MCF 10A (cell line): ENCODE measurements at regions of chr2 and their contacts with region 1.

Region 1: DNA sequence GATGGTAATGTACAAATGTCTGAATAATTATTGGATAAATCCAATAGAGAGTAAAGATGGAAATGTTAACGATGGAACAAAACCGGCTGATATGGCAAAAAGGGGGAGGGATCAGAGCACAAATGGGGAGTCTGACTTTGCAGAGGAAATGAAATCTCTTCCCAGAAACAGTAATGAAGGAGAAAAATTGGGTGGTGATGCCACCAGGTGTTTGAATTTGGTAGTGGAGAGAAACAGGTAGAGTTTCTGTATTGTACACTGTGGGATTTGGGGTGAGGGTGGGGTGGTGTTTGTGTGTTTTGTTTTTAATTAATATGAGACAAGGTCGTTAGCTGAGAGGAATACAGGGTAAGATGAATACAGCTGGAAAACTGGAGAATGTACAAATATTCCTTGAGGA is 20.4 kb upstream of the XDH start:
- DNase-seq: peak; percentile 55
- H3K4me3 Mint-ChIP-seq: no peak overlapping the region
- H3K27ac Mint-ChIP-seq: no peak overlapping the region
- H3K4me1 Mint-ChIP-seq: peaks cover 8% of the 10 kb centered on the region
- H3K27me3 Mint-ChIP-seq: no peaks in the 10 kb centered on the region
- CTCF ChIP-seq: peak; percentile 38

Region 2: DNA sequence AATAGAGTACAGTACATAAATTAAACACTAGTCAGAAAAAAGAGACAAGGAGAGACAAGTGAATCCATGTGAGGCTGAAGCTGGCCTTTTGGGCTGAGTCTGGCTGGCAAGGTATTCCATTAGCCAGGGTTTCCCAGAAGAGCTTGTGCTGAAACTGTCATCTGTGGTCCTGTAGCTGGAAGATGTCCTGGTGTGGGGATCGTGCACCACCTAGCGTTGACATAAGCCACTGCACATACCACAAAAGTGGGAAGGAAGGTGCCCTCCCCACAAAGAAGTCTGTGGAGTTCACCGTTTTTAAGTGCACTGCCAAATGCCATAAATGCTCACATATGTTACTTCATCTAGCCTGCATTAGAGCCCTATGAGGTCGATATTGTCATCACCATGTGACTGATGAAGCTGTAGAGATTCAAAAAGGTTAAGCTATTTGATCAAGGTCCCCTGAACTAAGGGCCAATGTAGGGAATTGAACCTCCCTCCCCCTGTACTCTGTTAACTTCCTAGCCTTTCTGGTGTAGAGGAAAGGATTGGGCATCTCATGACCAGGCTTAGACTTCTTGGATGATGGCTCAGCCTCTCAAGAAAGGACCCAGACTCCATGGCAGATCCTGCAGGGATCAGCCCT is 264.7 kb before region 1 on chr2:
- CTCF ChIA-PET with region 1: interaction called, 3 read pairs
- POLR2A ChIA-PET with region 1: no interaction called
- intact Hi-C with region 1: loop called (anchors 1 kb)
- DNase-seq: peak; percentile 71
- H3K4me3 Mint-ChIP-seq: no peak overlapping the region
- H3K27ac Mint-ChIP-seq: no peak overlapping the region
- H3K4me1 Mint-ChIP-seq: no peaks in the 10 kb centered on the region
- H3K27me3 Mint-ChIP-seq: peaks cover 18% of the 10 kb centered on the region
- CTCF ChIP-seq: peak; percentile 96

Region 3: GRCh38 chr2:31233741-31234682 is 200.9 kb before region 1 on chr2 and contains the start of gene EHD3:
- CTCF ChIA-PET with region 1: no interaction called
- POLR2A ChIA-PET with region 1: no interaction called
- intact Hi-C with region 1: loop called (anchors 1 kb)
- DNase-seq: peak; percentile 60
- H3K4me3 Mint-ChIP-seq: peak within 1 kb of the TSS; percentile 64
- H3K27ac Mint-ChIP-seq: no peak within 1 kb of the TSS
- H3K4me1 Mint-ChIP-seq: peaks cover 4% of the 10 kb centered on the region
- H3K27me3 Mint-ChIP-seq: peaks cover 46% of the 10 kb centered on the region
- CTCF ChIP-seq: peak; percentile 31
- total RNA-seq, gene EHD3: 0.49 and 0.86 TPM in 2 replicates

Region 4: DNA sequence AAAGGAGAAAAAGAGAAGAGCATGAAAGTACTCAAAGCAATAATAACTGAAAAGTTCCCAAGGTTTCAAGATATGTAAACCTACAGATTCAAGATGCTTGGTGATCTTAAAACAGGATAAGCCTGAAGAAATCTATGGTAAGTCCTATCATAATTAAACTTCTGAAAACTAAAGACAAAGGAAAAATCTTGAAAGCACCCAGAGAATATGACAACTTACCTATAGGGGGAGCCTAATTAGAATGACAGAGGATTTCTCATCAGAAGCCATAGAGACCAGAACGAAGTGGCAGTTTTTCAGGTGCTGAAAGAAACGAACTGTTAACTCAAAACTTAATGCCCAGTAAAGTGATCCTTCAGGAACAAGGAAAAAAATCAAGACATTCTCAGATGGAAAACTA is 80.1 kb before region 1 on chr2:
- CTCF ChIA-PET with region 1: interaction called, 3 read pairs
- POLR2A ChIA-PET with region 1: no interaction called
- intact Hi-C with region 1: loop called (anchors 2 kb)
- DNase-seq: peak; percentile 52
- H3K4me3 Mint-ChIP-seq: peak overlapping the region; percentile 50
- H3K27ac Mint-ChIP-seq: peak overlapping the region; percentile 87
- H3K4me1 Mint-ChIP-seq: peaks cover 7% of the 10 kb centered on the region
- H3K27me3 Mint-ChIP-seq: no peaks in the 10 kb centered on the region
- CTCF ChIP-seq: peak; percentile 44

Region 5: GRCh38 chr2:32516567-32516966 is 1081.7 kb after region 1 on chr2:
- CTCF ChIA-PET with region 1: no interaction called
- POLR2A ChIA-PET with region 1: no interaction called
- intact Hi-C with region 1: no loop called
- DNase-seq: no peak
- H3K4me3 Mint-ChIP-seq: no peak overlapping the region
- H3K27ac Mint-ChIP-seq: no peak overlapping the region
- H3K4me1 Mint-ChIP-seq: no peaks in the 10 kb centered on the region
- H3K27me3 Mint-ChIP-seq: no peaks in the 10 kb centered on the region
- CTCF ChIP-seq: no peak